ENCODE measurements at regions of chr2 and their contacts with region 1.

Region 1: DNA sequence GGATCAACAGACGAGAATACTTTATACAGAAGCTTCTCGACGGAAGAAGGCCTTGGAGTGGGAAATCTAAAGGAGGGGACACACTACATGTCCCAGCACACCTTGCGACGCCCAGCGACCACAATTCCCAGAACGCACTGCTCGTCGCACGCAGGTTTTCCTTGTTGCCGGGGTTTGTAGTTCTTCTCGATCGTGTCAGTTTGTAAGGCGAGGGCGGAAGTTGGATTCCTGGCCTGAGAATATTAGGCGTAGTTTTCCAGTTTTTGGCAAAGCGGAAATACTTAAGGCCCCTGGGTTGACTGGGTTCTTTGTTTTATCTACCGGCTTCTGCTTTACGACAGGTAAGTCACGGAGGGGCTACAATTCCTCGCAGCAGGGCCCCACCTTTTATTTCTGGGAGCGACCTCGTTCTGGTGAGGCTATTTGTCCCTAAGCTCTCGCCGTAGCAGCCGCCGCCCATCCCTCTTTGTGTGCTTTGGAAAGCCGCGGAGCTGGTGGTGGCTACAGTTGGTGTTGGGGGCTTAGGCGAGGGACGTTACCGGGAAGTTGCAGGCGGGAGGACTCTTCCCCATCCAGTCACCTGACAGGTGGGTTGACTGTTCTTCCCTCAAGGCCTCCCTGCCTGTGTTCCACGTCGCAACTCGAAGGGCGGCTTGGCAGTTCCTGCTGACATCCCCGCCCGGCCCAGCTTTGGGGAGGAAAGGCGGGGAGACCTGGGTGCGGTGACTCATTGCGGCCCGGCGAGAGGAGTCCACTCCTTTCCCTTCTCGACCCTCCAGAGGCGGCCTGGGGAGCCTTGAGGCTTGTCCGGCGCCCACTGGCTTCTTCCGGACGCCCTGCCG is at the start of gene DYNC1I2:
- DNase-seq: peak; percentile 94
- H3K4me3 ChIP-seq: peak within 1 kb of the TSS; percentile 69 to 82 (median 71)
- H3K27ac ChIP-seq: peak within 1 kb of the TSS; percentile 86
- H3K4me1 ChIP-seq: no peaks in the 10 kb centered on the region
- H3K27me3 ChIP-seq: no peaks in the 10 kb centered on the region
- CTCF ChIP-seq: no peak
- total RNA-seq, gene DYNC1I2: 97.4 to 119 TPM

Region 2: DNA sequence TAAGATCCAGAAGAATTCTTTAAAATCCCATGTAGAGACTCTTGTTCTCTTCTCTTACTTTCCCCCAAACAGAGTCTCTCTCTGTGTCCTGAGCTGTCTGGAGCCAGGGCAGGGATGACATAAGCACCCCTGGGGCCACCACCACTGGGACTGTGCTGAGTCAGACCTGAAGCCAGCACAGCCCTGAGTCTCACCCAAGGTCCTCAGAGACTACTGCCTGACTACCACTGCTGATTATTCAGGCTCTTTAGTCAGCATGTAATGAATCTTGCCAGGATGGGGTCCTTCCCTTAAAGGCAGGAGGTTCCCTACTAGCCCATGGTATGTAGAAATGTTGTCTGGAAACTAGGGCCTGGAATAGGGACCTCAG is 35.1 kb before region 1 on chr2:
- CTCF ChIA-PET with region 1: no interaction called
- dilution Hi-C with region 1: no loop called
- in situ Hi-C with region 1: no loop called
- intact Hi-C with region 1: loop called (anchors 1 kb)
- DNase-seq: peak; percentile 86
- H3K4me3 ChIP-seq: no peak overlapping the region
- H3K27ac ChIP-seq: peak overlapping the region; percentile 22
- H3K4me1 ChIP-seq: peaks cover 7% of the 10 kb centered on the region
- H3K27me3 ChIP-seq: no peaks in the 10 kb centered on the region
- CTCF ChIP-seq: no peak

Region 3: DNA sequence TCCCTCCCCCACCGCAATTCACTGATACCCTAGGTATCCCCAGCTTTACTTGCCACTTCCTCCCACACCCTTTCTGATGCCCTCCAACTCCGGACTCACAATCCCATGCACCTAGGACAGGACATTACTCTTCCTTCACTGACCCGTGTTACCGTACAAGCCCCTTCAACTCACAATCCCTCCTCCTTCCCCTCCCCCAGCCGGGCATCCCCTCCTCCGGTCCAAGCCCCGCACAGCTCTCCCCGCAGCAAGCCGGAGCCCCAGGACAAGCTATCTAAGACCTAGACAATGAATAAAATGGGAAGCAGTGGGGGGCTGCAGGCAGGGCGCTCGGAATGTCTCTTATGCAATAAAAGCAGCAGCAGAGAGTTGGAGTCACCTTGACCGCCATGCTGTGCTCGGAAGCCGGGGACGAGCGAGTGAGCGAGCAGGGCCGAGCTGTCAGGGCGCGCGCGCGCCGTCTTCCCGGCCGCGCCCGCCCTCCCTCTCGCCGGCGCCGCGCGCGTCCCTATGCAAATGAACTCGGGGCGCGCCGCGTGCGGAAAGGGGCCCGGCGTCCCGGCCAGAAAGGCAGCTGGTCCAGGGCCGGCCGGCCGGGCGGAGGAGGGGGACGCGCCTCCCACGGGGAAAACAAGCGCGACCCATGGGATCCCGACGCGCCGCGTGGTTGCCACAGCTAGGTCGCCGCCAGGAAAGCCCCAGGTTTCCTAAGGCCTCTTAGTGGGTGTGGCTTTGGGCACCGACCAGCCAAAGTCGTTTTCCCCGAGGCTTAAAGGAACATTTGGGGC is 206.5 kb after region 1 on chr2 and contains the start of gene SLC25A12:
- CTCF ChIA-PET with region 1: no interaction called
- dilution Hi-C with region 1: no loop called
- in situ Hi-C with region 1: no loop called
- intact Hi-C with region 1: loop called (anchors 1 kb)
- DNase-seq: peak; percentile 81
- H3K4me3 ChIP-seq: peak within 1 kb of the TSS; percentile 82 to 98 (median 90)
- H3K27ac ChIP-seq: peak within 1 kb of the TSS; percentile 79
- H3K4me1 ChIP-seq: peaks cover 4% of the 10 kb centered on the region
- H3K27me3 ChIP-seq: no peaks in the 10 kb centered on the region
- CTCF ChIP-seq: no peak
- total RNA-seq, gene SLC25A12: 18.6 to 22.8 TPM